Heart left ventricle (tissue), 16 donors: ENCODE measurements at regions of chr16 and their contacts with region 1.

Region 1: GRCh38 chr16:48542020-48542473 is 67.9 kb downstream of the N4BP1 start:
- DNase-seq: peak; percentile 46 to 72 (median 62)
- ATAC-seq: peak; percentile 56 to 77 (median 65)
- H3K4me3 ChIP-seq: no peak overlapping the region
- H3K27ac ChIP-seq: peak overlapping the region in 2 of 12 donors; percentile 19 to 47
- H3K4me1 ChIP-seq: peaks cover 2 to 54% (median 28%) of the 10 kb centered on the region in 12 donors
- H3K27me3 ChIP-seq: no peaks in the 10 kb centered on the region
- CTCF ChIP-seq: peak; percentile 34 to 70 (median 58)
- POLR2A ChIP-seq: no peak

Region 2: GRCh38 chr16:48231727-48232492 is 310.1 kb before region 1 on chr16:
- intact Hi-C with region 1: loop called in 3 of 10 experiments (anchors 10 kb)
- DNase-seq: no peak
- ATAC-seq: peak in 2 of 4 donors; percentile 53 to 65
- H3K4me3 ChIP-seq: no peak overlapping the region
- H3K27ac ChIP-seq: no peak overlapping the region
- H3K4me1 ChIP-seq: peaks cover 0 to 11% (median 0%) of the 10 kb centered on the region in 12 donors
- H3K27me3 ChIP-seq: no peaks in the 10 kb centered on the region
- CTCF ChIP-seq: peak in 8 of 12 donors; percentile 21 to 48 (median 33)
- POLR2A ChIP-seq: no peak

Region 3: DNA sequence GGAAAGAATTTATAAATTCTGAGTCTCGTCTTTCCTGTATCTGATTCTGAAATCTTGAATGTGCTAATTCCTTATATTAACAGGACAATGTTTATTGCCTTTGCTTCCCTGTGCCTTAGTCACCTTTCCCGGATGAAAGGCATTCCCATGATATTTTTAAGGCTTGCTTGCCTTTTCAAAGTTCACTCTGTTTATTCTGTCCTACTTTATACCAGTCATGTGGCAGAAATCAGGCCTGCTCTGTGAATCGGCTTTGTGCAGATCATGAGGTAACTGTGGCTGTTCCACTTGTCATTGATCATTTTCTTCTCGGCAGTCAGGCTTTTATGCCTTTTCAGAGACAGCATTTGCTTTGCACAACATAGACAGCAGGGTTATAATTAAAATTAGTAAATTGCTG is 265.9 kb before region 1 on chr16:
- intact Hi-C with region 1: loop called in 4 of 10 experiments (anchors 5 to 10 kb)
- DNase-seq: no peak
- ATAC-seq: peak in 2 of 4 donors; percentile 17 to 42
- H3K4me3 ChIP-seq: no peak overlapping the region
- H3K27ac ChIP-seq: peak overlapping the region in 9 of 12 donors; percentile 1 to 45 (median 17)
- H3K4me1 ChIP-seq: peaks cover 6 to 63% (median 34%) of the 10 kb centered on the region in 12 donors
- H3K27me3 ChIP-seq: no peaks in the 10 kb centered on the region
- CTCF ChIP-seq: no peak
- POLR2A ChIP-seq: no peak

Region 4: GRCh38 chr16:48365581-48366164 is 176.4 kb before region 1 on chr16:
- intact Hi-C with region 1: loop called in 2 of 10 experiments (anchors 5 kb)
- DNase-seq: peak; percentile 90 to 95 (median 93)
- ATAC-seq: peak; percentile 98 to 100 (median 100)
- H3K4me3 ChIP-seq: peak overlapping the region; percentile 38 to 70 (median 61)
- H3K27ac ChIP-seq: peak overlapping the region; percentile 43 to 90 (median 75)
- H3K4me1 ChIP-seq: peaks cover 3 to 64% (median 41%) of the 10 kb centered on the region in 12 donors
- H3K27me3 ChIP-seq: no peaks in the 10 kb centered on the region
- CTCF ChIP-seq: peak in 4 of 12 donors; percentile 15 to 36 (median 23)
- POLR2A ChIP-seq: peak; percentile 69 to 97

Region 5: GRCh38 chr16:48426244-48427141 is 115.6 kb before region 1 on chr16:
- intact Hi-C with region 1: no loop called
- DNase-seq: no peak
- ATAC-seq: peak in 3 of 4 donors; percentile 26 to 54 (median 27)
- H3K4me3 ChIP-seq: no peak overlapping the region
- H3K27ac ChIP-seq: no peak overlapping the region
- H3K4me1 ChIP-seq: peaks cover 0 to under 1% (median 0%) of the 10 kb centered on the region in 12 donors
- H3K27me3 ChIP-seq: no peaks in the 10 kb centered on the region
- CTCF ChIP-seq: no peak
- POLR2A ChIP-seq: no peak

Region 6: DNA sequence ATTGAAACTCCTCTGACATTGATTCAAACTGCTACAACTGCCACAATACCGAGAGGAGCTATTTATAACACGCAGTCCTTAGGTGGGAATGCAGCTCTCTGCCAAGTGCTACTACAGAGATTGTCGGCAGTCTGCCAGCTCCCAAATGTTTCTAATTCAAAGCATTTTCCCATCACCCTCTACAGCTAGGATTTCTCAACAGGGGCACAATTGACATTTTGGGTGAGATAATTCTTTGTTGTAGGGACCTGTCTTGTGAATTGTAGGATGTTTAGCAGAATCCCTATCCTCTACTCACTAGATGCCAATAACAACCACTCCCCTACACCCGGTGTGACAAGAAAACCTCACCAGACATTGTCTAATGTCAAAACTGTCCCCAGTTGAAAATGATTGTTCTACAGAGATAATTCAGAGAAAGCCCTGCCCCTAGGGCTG is 75.7 kb after region 1 on chr16:
- intact Hi-C with region 1: loop called (anchors 2 to 10 kb)
- DNase-seq: peak in 4 of 5 donors; percentile 76 to 88 (median 80)
- ATAC-seq: peak; percentile 62 to 84 (median 72)
- H3K4me3 ChIP-seq: peak overlapping the region in 5 of 12 donors; percentile 10 to 41 (median 29)
- H3K27ac ChIP-seq: peak overlapping the region; percentile 9 to 87 (median 64)
- H3K4me1 ChIP-seq: peaks cover 0 to 62% (median 38%) of the 10 kb centered on the region in 12 donors
- H3K27me3 ChIP-seq: no peaks in the 10 kb centered on the region
- CTCF ChIP-seq: no peak
- POLR2A ChIP-seq: no peak

Region 7: DNA sequence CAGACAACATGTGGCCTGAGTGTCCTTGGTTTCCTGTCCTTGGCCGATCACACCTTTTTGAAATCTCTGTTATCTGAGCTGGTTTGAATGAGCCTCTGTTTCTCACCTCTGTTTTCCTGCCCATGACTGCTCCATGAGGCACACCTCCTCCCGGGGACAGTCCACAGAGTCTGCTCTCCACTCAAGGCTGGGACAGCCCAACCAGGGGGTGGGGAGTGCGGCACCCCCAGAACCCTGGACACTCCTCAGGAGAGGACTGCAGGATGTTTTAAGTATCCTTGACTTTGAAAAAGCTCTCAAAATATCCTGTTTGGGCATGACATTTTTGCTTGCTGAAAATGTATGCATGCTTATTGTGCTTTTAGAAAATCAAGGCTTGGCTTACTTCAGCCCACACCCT is 400.9 kb after region 1 on chr16:
- intact Hi-C with region 1: no loop called
- DNase-seq: no peak
- ATAC-seq: no peak
- H3K4me3 ChIP-seq: no peak overlapping the region
- H3K27ac ChIP-seq: no peak overlapping the region
- H3K4me1 ChIP-seq: peaks cover 0 to 16% (median 0%) of the 10 kb centered on the region in 12 donors
- H3K27me3 ChIP-seq: no peaks in the 10 kb centered on the region
- CTCF ChIP-seq: no peak
- POLR2A ChIP-seq: no peak